ENCODE measurements at regions of chr1 and their contacts with region 1.

Region 1: GRCh38 chr1:42335050-42335808 is at the start of gene FOXJ3:
- DNase-seq: peak; percentile 98
- H3K4me3 ChIP-seq: peak within 1 kb of the TSS; percentile 97
- H3K27ac ChIP-seq: peak within 1 kb of the TSS; percentile 55
- H3K4me1 ChIP-seq: peaks cover 25% of the 10 kb centered on the region
- CTCF ChIP-seq: no peak
- total RNA-seq, gene FOXJ3: 27.6 and 34.8 TPM in 2 replicates

Region 2: DNA sequence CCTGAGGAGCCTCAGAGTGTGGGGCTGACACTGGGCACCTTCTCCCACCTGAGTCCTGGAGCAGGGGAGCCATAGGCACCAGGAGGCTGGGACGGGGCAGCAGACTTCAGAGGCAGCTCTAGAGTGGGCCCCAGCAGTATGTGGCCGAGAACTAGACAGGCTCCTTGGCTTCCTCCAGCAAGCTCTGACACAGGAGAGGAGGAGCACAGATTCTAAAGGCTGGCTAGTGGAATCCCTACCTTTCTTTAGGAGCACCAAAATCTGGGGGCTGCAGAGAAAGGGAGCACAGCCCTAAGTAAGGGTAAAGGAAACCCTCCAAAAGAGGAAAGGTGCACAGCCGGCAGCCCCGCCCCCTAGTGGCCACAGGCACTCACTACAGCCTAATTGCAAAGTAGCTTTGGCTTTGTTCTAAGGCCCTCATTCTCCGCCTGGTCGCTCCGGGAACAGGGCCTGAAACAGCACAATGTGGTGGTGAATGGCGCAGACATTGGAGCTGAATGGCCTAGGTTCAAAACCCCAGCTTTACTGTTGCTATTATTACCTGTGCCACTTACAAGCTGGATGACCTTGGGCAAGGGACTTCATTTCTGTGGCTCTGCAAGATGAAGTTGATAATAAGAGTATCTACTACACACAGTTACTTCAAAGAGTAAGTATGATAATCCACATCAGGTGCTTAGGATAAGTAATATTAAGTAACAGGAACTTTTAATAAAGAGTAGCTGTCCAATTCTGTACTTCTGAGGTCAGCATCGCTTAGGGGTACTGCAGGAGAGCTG is 161.9 kb before region 1 on chr1:
- CTCF ChIA-PET with region 1: no interaction called
- POLR2A ChIA-PET with region 1: no interaction called
- intact Hi-C with region 1: loop called (anchors 2 kb)
- DNase-seq: peak; percentile 59
- H3K4me3 ChIP-seq: no peak overlapping the region
- H3K27ac ChIP-seq: no peak overlapping the region
- H3K4me1 ChIP-seq: no peaks in the 10 kb centered on the region
- CTCF ChIP-seq: peak; percentile 94

Region 3: DNA sequence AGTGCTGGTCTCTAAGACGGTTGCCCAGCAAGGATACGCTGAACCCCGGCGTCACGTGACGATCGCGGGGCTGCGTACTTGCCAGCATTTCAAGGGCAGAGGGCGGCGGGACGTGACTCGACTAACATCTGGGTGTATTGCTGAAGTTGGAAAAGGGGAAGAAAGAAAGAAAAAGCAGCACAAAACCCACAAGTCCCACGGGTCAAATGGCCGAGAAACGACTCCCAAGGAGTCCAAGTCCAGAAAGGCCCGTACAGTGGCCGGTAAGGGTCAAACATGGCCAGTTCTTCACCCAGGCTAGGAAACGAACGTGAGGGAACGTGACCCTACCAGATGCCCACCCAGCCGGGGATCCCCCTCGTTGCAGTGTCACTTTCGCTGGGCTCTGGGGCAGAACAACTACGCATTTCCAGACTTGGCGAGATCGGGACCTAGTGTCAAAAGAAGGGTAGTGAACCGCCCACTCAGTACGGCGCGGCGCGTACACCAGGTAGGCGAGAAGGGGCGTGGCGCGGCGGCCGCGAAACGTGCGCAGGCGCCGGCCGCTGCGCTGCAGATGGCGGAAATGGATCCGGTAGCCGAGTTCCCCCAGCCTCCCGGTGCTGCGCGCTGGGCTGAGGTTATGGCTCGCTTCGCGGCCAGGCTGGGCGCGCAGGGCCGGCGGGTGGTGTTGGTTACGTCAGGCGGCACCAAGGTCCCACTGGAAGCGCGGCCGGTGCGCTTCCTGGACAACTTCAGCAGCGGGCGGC is 121.0 kb after region 1 on chr1 and contains the starts of genes PPCS and ZMYND12:
- CTCF ChIA-PET with region 1: no interaction called
- POLR2A ChIA-PET with region 1: no interaction called
- intact Hi-C with region 1: loop called (anchors 2 kb)
- DNase-seq: peak; percentile 86
- H3K4me3 ChIP-seq: peak within 1 kb of the TSS; percentile 74
- H3K27ac ChIP-seq: peak within 1 kb of the TSS; percentile 69
- H3K4me1 ChIP-seq: peaks cover 12% of the 10 kb centered on the region
- CTCF ChIP-seq: no peak
- total RNA-seq, gene PPCS: 23.2 and 46.9 TPM in 2 replicates
- total RNA-seq, gene ZMYND12: not detected in 2 replicates

Region 4: DNA sequence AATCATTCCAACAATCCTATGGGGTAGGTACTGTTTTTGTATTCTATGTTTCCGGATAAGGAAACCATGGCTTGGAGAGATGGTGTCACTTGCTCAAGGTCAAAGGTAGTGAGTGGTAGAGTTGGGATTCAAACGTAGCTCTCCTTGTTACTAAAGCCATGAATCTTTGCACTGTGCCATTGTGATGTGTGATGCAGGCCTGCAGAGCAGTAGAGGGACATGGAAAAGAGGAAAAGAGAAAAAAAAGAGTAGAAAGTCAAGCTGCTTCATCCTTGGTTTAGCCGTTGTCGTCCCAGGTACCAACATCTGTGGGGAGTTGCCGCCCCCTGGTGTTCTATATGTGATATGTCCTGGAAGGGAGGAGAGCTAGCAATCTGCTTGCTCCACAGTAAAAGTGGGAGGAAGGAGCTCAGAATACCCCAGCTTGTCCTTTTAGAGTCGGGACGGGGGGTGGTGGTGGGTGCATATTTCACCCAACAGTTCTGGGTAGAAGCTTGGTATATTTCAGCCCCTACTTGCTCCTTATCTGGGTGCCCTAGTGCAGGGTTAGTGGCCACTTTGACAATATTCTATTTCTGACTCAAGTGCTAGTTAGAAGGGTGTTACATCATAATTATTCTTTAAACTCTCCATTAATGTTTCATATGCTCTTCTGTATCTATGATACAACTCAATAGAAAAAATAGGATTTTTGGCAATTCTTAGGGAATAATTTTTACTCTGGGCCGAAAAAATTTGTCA is 738.4 kb after region 1 on chr1:
- CTCF ChIA-PET with region 1: no interaction called
- POLR2A ChIA-PET with region 1: no interaction called
- intact Hi-C with region 1: no loop called
- DNase-seq: peak; percentile 77
- H3K4me3 ChIP-seq: no peak overlapping the region
- H3K27ac ChIP-seq: no peak overlapping the region
- H3K4me1 ChIP-seq: peaks cover 16% of the 10 kb centered on the region
- CTCF ChIP-seq: peak; percentile 94

Measured in OCI-LY7 (cell line).